Ascending aorta (tissue), 2 donors: ENCODE measurements at regions of chr15 and their contacts with region 1.

Region 1: GRCh38 chr15:83747050-83747717 is 93.3 kb downstream of the ADAMTSL3 start:
- DNase-seq: no peak
- H3K4me3 ChIP-seq: peak overlapping the region; percentile 28 to 58
- H3K27ac ChIP-seq: peak overlapping the region; percentile 69 to 78
- H3K4me1 ChIP-seq: peaks cover 0 to 2% of the 10 kb centered on the region in 2 donors
- H3K27me3 ChIP-seq: no peaks in the 10 kb centered on the region
- CTCF ChIP-seq: peak; percentile 33 to 62 (median 41)

Region 2: GRCh38 chr15:83446904-83447709 is 300.1 kb before region 1 on chr15 and contains the start of gene SH3GL3:
- intact Hi-C with region 1: loop called (anchors 10 kb)
- DNase-seq: peak; percentile 47 to 90
- H3K4me3 ChIP-seq: peak within 1 kb of the TSS; percentile 70 to 84
- H3K27ac ChIP-seq: no peak within 1 kb of the TSS
- H3K4me1 ChIP-seq: peaks cover 0 to 2% of the 10 kb centered on the region in 2 donors
- H3K27me3 ChIP-seq: no peaks in the 10 kb centered on the region
- CTCF ChIP-seq: peak in 2 of 3 experiments; percentile 42 to 47
- total RNA-seq, gene SH3GL3: not detected

Region 3: GRCh38 chr15:83564975-83565532 is 182.1 kb before region 1 on chr15:
- intact Hi-C with region 1: loop called (anchors 1 kb)
- DNase-seq: no peak
- H3K4me3 ChIP-seq: no peak overlapping the region
- H3K27ac ChIP-seq: no peak overlapping the region
- H3K4me1 ChIP-seq: no peaks in the 10 kb centered on the region
- H3K27me3 ChIP-seq: no peaks in the 10 kb centered on the region
- CTCF ChIP-seq: no peak

Region 4: GRCh38 chr15:83810110-83810509 is 62.9 kb after region 1 on chr15:
- intact Hi-C with region 1: no loop called
- DNase-seq: no peak
- H3K4me3 ChIP-seq: no peak overlapping the region
- H3K27ac ChIP-seq: no peak overlapping the region
- H3K4me1 ChIP-seq: no peaks in the 10 kb centered on the region
- H3K27me3 ChIP-seq: no peaks in the 10 kb centered on the region
- CTCF ChIP-seq: no peak